Breast epithelium (tissue), 4 donors: ENCODE measurements at regions of chr2 and their contacts with region 1.

Region 1: GRCh38 chr2:178256382-178257042 is 62.2 kb downstream of the OSBPL6 start:
- DNase-seq: no peak
- H3K4me3 ChIP-seq: no peak overlapping the region
- H3K27ac ChIP-seq: no peak overlapping the region
- H3K4me1 ChIP-seq: no peaks in the 10 kb centered on the region
- H3K27me3 ChIP-seq: no peaks in the 10 kb centered on the region
- CTCF ChIP-seq: no peak
- POLR2A ChIP-seq: no peak

Region 2: GRCh38 chr2:177187631-177188312 is 1068.7 kb before region 1 on chr2:
- intact Hi-C with region 1: no loop called
- DNase-seq: no peak
- H3K4me3 ChIP-seq: no peak overlapping the region
- H3K27ac ChIP-seq: no peak overlapping the region
- H3K4me1 ChIP-seq: no peaks in the 10 kb centered on the region
- H3K27me3 ChIP-seq: no peaks in the 10 kb centered on the region
- CTCF ChIP-seq: no peak
- POLR2A ChIP-seq: no peak

Region 3: GRCh38 chr2:178891265-178891958 is 634.9 kb after region 1 on chr2:
- intact Hi-C with region 1: no loop called
- DNase-seq: no peak
- H3K4me3 ChIP-seq: no peak overlapping the region
- H3K27ac ChIP-seq: no peak overlapping the region
- H3K4me1 ChIP-seq: no peaks in the 10 kb centered on the region
- H3K27me3 ChIP-seq: no peaks in the 10 kb centered on the region
- CTCF ChIP-seq: peak; percentile 69 to 91 (median 88)
- POLR2A ChIP-seq: no peak

Region 4: GRCh38 chr2:179071810-179072355 is 815.4 kb after region 1 on chr2:
- intact Hi-C with region 1: loop called (anchors 10 kb)
- DNase-seq: no peak
- H3K4me3 ChIP-seq: no peak overlapping the region
- H3K27ac ChIP-seq: no peak overlapping the region
- H3K4me1 ChIP-seq: no peaks in the 10 kb centered on the region
- H3K27me3 ChIP-seq: no peaks in the 10 kb centered on the region
- CTCF ChIP-seq: no peak
- POLR2A ChIP-seq: no peak